ENCODE measurements at regions of chr11 and their contacts with region 1.

Region 1: GRCh38 chr11:117327567-117328374 is at the start of gene CEP164:
- DNase-seq: peak; percentile 91 to 98
- H3K4me3 ChIP-seq: peak within 1 kb of the TSS; percentile 82 to 87
- H3K27ac ChIP-seq: peak within 1 kb of the TSS; percentile 88 to 89
- H3K4me1 ChIP-seq: peaks cover 0 to 6% of the 10 kb centered on the region in 2 donors
- H3K27me3 ChIP-seq: no peaks in the 10 kb centered on the region
- CTCF ChIP-seq: no peak
- total RNA-seq, gene CEP164: 15.1 TPM

Region 2: DNA sequence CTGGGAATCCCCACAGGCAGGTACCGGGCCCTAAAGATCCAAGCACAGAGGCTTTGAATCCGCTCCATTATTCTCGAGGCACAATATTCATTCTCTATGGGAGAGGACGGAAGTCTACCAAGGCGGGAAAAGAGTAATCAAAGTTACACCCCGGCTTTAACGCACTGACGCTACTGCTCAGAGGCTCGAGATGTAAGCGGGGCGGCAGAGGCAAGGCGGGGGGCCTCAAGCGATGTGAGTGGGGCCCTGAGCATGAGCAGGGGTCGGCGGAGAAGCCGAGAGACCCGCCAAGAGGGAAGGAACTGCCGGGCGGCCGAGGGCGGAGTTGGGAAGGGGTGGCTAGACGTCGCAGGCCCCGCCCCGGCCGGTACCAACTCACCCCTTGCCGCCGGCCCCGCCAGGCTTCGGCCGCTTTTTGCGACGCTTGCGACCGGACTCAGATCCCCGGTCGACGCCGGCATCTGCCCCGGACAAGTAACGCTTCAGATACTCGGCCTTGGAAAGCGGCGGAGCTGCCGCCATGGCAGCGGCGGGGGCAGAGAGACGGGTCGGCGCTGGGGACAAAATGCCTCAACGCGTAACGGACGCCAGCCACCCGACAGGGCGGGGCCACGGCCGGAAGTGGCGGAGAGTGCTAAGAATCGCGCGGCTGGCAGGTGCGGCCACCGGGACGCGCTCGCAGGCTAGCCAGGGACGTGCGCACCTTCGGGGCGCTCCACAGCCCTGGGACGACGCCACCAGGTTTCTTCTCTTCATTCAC is 555.1 kb before region 1 on chr11 and contains the start of gene BUD13:
- intact Hi-C with region 1: loop called (anchors 5 kb)
- DNase-seq: peak; percentile 27 to 91
- H3K4me3 ChIP-seq: peak within 1 kb of the TSS; percentile 71 to 82
- H3K27ac ChIP-seq: peak within 1 kb of the TSS; percentile 88 to 94
- H3K4me1 ChIP-seq: peaks cover 0 to 14% of the 10 kb centered on the region in 2 donors
- H3K27me3 ChIP-seq: no peaks in the 10 kb centered on the region
- CTCF ChIP-seq: peak in 1 of 3 experiments; percentile 15
- total RNA-seq, gene BUD13: 23.9 TPM

Region 3: GRCh38 chr11:117654281-117655255 is 326.8 kb after region 1 on chr11:
- intact Hi-C with region 1: no loop called
- DNase-seq: no peak
- H3K4me3 ChIP-seq: no peak overlapping the region
- H3K27ac ChIP-seq: no peak overlapping the region
- H3K4me1 ChIP-seq: no peaks in the 10 kb centered on the region
- H3K27me3 ChIP-seq: no peaks in the 10 kb centered on the region
- CTCF ChIP-seq: no peak

Measured in ascending aorta (tissue), 2 donors.